ENCODE measurements at regions of chr10 and their contacts with region 1.

Region 1: GRCh38 chr10:75401569-75402485 is at the start of gene ZNF503:
- DNase-seq: peak; percentile 99
- H3K4me3 ChIP-seq: peak within 1 kb of the TSS; percentile 98 to 100
- H3K27ac ChIP-seq: peak within 1 kb of the TSS; percentile 98 to 99
- H3K4me1 ChIP-seq: peaks cover 9% of the 10 kb centered on the region
- H3K27me3 ChIP-seq: no peaks in the 10 kb centered on the region
- CTCF ChIP-seq: peak; percentile 12 to 72 (median 38)
- POLR2A ChIP-seq: peak; percentile 93
- total RNA-seq, gene ZNF503: 23.9 to 33.7 TPM

Region 2: DNA sequence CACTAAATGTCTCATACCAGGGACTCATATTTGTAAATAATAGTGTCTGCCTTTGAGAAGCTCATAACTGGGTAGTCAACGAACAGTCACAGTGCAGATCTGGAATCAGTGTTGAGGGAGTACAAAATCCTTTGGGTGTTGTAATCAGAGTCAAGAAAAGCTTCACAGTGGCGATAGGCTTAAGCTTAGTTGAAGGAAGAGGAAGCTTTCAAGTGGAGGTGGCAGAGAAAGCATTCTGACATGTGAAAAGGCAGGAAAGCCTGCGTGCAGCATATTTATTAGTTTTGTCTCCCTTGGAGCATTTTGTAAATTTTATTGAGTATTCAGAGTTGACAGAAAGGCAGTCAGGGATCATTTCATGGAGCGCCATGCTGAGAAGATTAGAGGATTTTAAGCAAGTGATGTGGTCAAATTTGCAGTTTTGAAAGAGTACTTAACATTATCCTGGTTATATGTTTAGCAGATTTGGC is 1145.9 kb before region 1 on chr10:
- intact Hi-C with region 1: no loop called
- DNase-seq: no peak
- H3K4me3 ChIP-seq: no peak overlapping the region
- H3K27ac ChIP-seq: no peak overlapping the region
- H3K4me1 ChIP-seq: no peaks in the 10 kb centered on the region
- H3K27me3 ChIP-seq: no peaks in the 10 kb centered on the region
- CTCF ChIP-seq: no peak
- POLR2A ChIP-seq: no peak

Region 3: DNA sequence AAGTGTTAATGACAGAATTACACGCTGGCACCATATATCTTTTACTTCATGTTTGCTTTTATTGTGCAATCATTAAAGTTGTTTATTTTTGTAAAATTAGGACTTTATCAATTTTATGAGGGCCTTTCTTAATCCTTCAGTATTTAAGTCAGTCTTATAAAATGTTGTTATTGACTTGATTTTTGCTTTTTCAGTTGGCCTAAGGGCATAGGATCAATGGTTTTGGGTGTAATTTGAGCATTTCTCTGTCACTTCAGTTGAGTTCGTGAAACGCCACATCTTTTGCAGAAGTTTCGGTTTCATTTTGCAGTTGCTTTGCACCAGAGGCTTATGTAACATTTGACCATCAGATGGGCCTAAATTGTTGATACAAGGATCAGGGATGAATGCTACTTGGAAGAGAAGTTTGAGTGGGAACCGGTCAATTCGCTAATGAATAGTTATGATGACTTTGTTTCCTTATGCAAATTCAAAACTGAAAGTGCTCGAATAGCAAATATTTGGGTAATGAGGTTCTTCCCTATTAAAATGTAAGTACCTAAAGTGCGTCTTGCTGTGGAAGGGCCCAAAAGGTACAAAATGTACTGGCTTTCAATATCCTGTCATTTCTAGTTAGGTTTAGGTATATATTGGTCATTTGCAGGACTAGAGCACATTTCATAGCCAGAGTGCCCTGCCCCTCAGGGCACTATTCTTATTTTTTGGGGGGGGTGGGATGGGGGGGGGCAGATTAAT is 370.5 kb after region 1 on chr10:
- intact Hi-C with region 1: loop called (anchors 2 kb)
- DNase-seq: no peak
- H3K4me3 ChIP-seq: peak overlapping the region in 1 of 2 donors; percentile 16
- H3K27ac ChIP-seq: peak overlapping the region; percentile 51 to 68
- H3K4me1 ChIP-seq: peaks cover 5% of the 10 kb centered on the region
- H3K27me3 ChIP-seq: no peaks in the 10 kb centered on the region
- CTCF ChIP-seq: no peak
- POLR2A ChIP-seq: no peak

Region 4: GRCh38 chr10:76036111-76036940 is 634.5 kb after region 1 on chr10:
- intact Hi-C with region 1: loop called (anchors 2 kb)
- DNase-seq: peak; percentile 79
- H3K4me3 ChIP-seq: no peak overlapping the region
- H3K27ac ChIP-seq: peak overlapping the region; percentile 13 to 48
- H3K4me1 ChIP-seq: peaks cover 4% of the 10 kb centered on the region
- H3K27me3 ChIP-seq: no peaks in the 10 kb centered on the region
- CTCF ChIP-seq: peak; percentile 79 to 95 (median 91)
- POLR2A ChIP-seq: no peak

Region 5: DNA sequence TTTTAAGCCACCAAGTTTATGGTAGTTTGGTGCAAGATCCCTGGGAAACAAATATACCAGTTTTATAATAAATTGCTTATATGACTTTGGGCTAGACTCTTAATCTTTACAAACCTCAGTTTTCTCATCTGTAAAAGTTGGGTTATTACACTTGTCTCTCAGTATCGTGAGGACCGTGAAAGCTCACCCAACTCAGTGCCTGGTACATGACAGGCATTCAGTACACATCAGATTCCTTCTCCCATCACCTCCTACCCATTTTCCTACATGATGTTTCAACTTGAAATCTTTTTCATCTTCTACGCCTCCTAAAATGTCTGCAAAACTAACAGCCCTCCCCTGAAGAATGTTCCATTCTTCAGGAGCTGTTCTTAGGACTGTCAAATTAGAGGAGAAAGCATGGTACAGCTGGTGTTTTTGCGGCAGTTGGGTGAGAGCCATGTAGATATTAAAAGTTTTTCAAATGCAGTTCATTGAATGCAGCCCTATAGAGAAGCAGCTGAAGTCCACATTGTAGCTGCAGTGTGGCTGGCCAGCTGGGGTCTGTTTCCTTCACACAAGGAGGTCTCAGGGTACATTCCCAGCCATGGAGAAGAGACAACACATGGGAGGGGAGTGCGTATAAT is 842.3 kb after region 1 on chr10:
- intact Hi-C with region 1: loop called (anchors 5 kb)
- DNase-seq: no peak
- H3K4me3 ChIP-seq: no peak overlapping the region
- H3K27ac ChIP-seq: peak overlapping the region in 1 of 2 donors; percentile 13
- H3K4me1 ChIP-seq: no peaks in the 10 kb centered on the region
- H3K27me3 ChIP-seq: no peaks in the 10 kb centered on the region
- CTCF ChIP-seq: no peak
- POLR2A ChIP-seq: no peak

Region 6: DNA sequence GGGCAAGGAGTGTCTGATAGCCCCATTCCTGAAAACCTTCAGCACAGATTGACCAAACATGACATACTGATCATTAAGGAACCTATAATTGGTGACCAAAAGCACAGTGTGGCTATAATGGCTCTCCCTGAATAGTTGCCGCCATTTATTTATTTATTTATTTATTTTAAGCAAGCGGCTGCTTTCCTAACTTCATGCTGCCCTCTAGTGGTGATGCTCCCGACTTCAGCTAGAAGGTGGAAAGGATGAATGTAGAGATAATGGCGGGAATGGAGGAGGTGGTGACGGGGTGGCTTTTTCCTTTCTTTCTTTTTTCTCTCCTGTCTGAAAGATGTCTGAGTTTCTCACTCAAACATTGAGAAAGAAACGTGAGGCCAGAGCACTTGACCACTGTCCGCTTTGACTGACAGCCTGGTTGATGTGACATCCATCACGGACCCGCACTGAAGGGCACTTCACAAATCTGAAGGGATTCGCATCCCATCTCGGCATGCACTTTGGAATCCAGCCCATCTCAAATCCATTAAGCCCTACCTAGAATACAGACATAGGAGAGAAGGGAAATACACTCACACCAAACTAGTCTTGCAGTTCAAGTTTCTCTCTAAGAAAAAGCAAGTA is 1145.6 kb after region 1 on chr10:
- intact Hi-C with region 1: loop called (anchors 5 kb)
- DNase-seq: peak; percentile 82
- H3K4me3 ChIP-seq: no peak overlapping the region
- H3K27ac ChIP-seq: no peak overlapping the region
- H3K4me1 ChIP-seq: no peaks in the 10 kb centered on the region
- H3K27me3 ChIP-seq: no peaks in the 10 kb centered on the region
- CTCF ChIP-seq: peak; percentile 74 to 86 (median 82)
- POLR2A ChIP-seq: no peak

Region 7: DNA sequence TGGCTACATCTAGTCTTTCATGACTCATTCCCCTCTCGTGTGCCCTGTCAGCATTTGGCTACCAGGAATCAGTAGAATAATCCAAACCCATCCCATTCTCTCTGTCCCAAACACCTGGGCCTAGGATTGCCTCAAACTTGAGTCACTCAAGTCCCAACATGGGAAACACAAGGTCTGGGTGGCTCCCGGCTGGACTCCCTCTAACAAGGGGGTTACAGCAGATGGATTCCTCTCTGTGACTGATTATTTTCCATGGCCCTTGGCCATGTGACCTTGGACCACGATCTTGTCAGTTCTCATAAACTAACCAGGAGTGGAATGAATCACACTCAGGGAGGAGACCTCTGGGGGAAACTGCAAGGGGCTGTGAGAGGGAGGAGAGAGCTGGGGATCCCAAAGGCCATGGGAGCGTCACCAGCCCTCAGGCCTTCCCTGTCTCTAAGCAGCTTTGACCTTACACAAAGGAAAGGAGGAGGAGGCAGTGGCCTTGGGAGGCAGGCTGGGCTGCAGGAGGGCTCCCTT is 1702.7 kb after region 1 on chr10:
- intact Hi-C with region 1: loop called (anchors 10 kb)
- DNase-seq: no peak
- H3K4me3 ChIP-seq: no peak overlapping the region
- H3K27ac ChIP-seq: no peak overlapping the region
- H3K4me1 ChIP-seq: no peaks in the 10 kb centered on the region
- H3K27me3 ChIP-seq: no peaks in the 10 kb centered on the region
- CTCF ChIP-seq: no peak
- POLR2A ChIP-seq: no peak